ENCODE measurements at regions of chr10 and their contacts with region 1.

Region 1: DNA sequence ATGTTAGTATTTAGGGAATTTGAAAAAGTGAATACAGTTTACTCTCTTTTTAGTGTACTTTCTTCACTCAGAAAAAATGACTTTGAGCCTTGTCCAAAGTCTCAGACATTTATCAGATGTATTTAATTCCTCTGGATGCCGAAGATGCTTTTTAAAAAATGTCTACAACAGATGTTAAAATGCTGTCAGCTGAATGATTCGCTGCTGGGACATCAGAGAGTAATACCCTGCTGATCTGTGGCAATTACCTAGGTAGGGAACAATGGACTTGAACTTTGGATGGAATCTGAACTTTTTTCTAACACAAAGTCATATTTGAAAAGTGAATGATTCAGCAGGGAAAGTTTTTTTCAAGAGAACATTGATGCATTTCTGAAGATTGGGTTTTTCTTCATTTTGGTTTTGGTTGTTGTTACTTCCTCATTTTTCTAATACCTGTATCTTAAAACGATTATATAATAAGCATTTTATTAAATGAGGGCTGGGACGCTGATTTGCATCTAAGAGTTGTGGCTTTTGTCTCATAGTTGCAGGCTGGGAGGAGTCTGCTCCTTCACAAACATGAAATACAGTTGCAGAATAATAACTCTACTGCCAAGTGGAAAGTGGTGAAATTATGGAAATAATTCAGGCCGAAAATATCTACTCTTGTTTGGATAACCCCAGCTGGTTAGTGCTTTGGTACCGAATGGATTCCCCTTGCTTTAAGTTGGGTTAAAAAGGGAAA is 98.0 kb downstream of the SPAG6 start:
- DNase-seq: no peak
- ATAC-seq: no peak
- H3K4me3 ChIP-seq: no peak overlapping the region
- H3K27ac ChIP-seq: no peak overlapping the region
- H3K4me1 ChIP-seq: peaks cover 0 to 10% (median 7%) of the 10 kb centered on the region in 9 donors
- H3K27me3 ChIP-seq: peaks cover 0 to 19% (median 5%) of the 10 kb centered on the region in 7 donors
- CTCF ChIP-seq: no peak

Region 2: DNA sequence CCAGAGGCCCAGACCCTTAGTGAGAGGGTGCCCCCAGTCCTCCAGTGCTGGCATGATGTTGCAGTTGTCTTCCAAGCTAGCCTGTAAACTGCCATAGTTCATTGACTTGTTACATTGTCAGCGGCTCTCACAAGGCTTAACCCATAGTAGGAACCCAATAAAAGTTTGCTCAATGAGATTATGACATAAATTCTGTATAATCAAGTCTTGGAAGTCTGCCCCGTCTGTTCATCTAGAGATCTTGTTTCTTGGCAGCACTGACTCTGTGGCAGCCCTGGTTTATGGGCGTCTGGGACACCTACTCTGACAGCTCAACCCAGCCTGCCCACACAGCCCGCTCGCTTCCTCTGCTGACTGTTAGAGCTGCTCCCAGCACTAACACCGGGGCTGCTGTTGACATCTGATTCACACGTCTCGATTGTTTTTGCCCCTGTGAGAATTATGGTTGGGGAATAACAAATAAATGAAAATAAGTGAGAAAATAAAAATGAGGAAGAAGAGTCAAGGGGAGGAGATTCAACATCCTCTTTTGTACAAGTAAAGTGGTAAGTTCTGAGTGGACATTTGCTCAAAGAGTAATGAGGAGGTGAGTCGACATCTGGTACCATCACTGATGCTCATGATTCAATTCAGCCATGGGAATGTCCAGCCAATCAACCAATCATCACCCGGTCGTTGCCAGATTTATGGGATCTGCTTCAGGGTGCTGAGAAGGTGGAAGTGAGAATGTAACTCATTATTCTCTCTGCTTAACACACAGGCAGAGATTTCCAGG is 62.8 kb after region 1 on chr10:
- intact Hi-C with region 1: no loop called
- DNase-seq: no peak
- ATAC-seq: no peak
- H3K4me3 ChIP-seq: no peak overlapping the region
- H3K27ac ChIP-seq: no peak overlapping the region
- H3K4me1 ChIP-seq: peaks cover 0 to 7% (median 0%) of the 10 kb centered on the region in 9 donors
- H3K27me3 ChIP-seq: no peaks in the 10 kb centered on the region
- CTCF ChIP-seq: no peak

Region 3: GRCh38 chr10:22550732-22551131 is 107.4 kb after region 1 on chr10:
- intact Hi-C with region 1: loop called in 1 of 10 experiments (anchors 10 kb)
- DNase-seq: peak; percentile 29 to 46
- ATAC-seq: no peak
- H3K4me3 ChIP-seq: no peak overlapping the region
- H3K27ac ChIP-seq: no peak overlapping the region
- H3K4me1 ChIP-seq: peaks cover 0 to 19% (median 5%) of the 10 kb centered on the region in 9 donors
- H3K27me3 ChIP-seq: no peaks in the 10 kb centered on the region
- CTCF ChIP-seq: peak; percentile 10 to 66 (median 57)

Region 4: DNA sequence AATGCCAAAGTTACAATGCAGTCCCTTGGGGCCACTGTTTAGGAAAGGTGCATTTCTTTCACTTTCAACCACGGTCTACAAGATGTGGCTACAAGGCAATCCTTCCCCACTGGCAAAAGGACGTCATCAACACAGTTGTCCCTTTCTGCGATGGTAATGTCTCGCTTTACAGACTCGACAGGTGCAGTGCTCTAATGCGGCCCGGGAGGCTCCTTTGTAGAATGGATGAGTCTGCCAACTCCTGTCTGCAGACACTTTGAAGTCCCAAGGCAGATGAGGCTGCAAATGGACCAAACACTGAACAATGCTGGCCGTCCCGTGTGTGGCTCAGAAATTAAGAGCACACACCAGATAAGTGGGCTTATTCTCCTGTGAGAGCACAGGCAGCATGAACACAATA is 137.4 kb after region 1 on chr10:
- intact Hi-C with region 1: no loop called
- DNase-seq: no peak
- ATAC-seq: no peak
- H3K4me3 ChIP-seq: no peak overlapping the region
- H3K27ac ChIP-seq: peak overlapping the region in 1 of 10 donors; percentile 39
- H3K4me1 ChIP-seq: peaks cover 0 to 4% (median 0%) of the 10 kb centered on the region in 9 donors
- H3K27me3 ChIP-seq: no peaks in the 10 kb centered on the region
- CTCF ChIP-seq: no peak

Measured in heart right ventricle (tissue), 16 donors.